MCF 10A (cell line): ENCODE measurements at regions of chr6 and their contacts with region 1.

Region 1: GRCh38 chr6:89035252-89036106 is 45.1 kb upstream of the PNRC1 start:
- DNase-seq: peak; percentile 100
- H3K4me3 Mint-ChIP-seq: peak overlapping the region; percentile 47
- H3K27ac Mint-ChIP-seq: peak overlapping the region; percentile 95
- H3K4me1 Mint-ChIP-seq: peaks cover 21% of the 10 kb centered on the region
- H3K27me3 Mint-ChIP-seq: no peaks in the 10 kb centered on the region
- CTCF ChIP-seq: no peak

Region 2: GRCh38 chr6:88992741-88993552 is 42.5 kb before region 1 on chr6:
- CTCF ChIA-PET with region 1: no interaction called
- POLR2A ChIA-PET with region 1: interaction called, 11 read pairs
- intact Hi-C with region 1: no loop called
- DNase-seq: no peak
- H3K4me3 Mint-ChIP-seq: no peak overlapping the region
- H3K27ac Mint-ChIP-seq: no peak overlapping the region
- H3K4me1 Mint-ChIP-seq: peaks cover 8% of the 10 kb centered on the region
- H3K27me3 Mint-ChIP-seq: no peaks in the 10 kb centered on the region
- CTCF ChIP-seq: no peak

Region 3: DNA sequence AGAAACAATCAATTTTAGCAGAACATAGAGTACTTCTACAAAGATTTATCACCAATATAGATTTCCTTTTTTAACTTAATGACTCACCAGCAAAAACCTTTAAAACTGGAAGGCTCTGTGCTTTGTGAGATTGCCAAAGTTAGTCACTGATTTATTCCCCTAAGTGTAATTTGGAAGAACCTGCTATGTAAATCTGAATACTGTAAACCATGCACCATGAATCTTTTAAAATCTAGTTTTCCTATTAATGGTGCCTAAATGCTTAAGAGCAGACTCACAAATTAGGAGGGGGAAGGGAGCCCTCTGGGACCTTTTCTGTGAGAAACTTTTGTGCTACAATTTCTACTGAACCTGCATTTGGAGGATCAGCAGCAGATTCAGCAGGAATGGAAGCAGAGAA is 12.7 kb before region 1 on chr6:
- CTCF ChIA-PET with region 1: interaction called, 4 read pairs
- POLR2A ChIA-PET with region 1: interaction called, 61 read pairs
- intact Hi-C with region 1: no loop called
- DNase-seq: peak; percentile 40
- H3K4me3 Mint-ChIP-seq: no peak overlapping the region
- H3K27ac Mint-ChIP-seq: no peak overlapping the region
- H3K4me1 Mint-ChIP-seq: peaks cover 24% of the 10 kb centered on the region
- H3K27me3 Mint-ChIP-seq: no peaks in the 10 kb centered on the region
- CTCF ChIP-seq: no peak

Region 4: DNA sequence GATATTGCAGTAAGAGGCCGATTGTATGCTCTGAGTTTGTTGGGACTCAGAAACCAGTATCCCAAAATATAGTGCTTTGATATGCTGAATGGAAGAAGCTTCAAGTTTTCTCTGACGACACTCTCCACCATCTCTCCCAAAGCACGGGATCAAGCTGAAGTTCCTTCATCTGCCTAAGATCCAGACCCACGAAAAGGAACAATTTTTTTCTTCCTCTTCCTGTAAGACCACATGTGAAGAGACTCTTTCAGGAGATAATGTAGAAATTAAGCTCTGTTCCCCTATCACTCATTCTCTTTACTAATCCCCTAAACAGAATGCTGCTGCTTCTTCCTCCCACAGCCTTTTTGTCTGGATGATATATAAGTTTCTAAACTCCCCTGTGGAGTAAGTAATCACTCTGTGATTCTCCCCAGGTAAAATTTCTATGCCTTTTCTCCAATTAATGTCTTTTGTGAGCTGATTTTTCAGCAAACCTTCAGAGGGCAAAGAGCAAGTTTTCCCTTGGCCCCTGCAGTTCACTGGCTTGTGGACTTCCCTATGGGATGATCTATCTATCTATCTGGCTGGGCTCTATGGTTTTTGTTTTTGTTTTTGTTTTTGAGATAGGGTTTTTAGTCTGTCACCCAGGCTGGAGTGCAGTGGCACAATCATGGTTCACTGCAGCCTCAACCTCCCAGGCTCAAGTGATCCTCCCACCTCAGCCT is 31.6 kb after region 1 on chr6:
- CTCF ChIA-PET with region 1: interaction called, 4 read pairs
- POLR2A ChIA-PET with region 1: interaction called, 39 read pairs
- intact Hi-C with region 1: no loop called
- DNase-seq: no peak
- H3K4me3 Mint-ChIP-seq: no peak overlapping the region
- H3K27ac Mint-ChIP-seq: no peak overlapping the region
- H3K4me1 Mint-ChIP-seq: peaks cover 12% of the 10 kb centered on the region
- H3K27me3 Mint-ChIP-seq: no peaks in the 10 kb centered on the region
- CTCF ChIP-seq: no peak

Region 5: GRCh38 chr6:89080542-89081422 is 45.3 kb after region 1 on chr6 and contains the start of gene PNRC1:
- CTCF ChIA-PET with region 1: interaction called, 25 read pairs
- POLR2A ChIA-PET with region 1: interaction called, 573 read pairs
- intact Hi-C with region 1: loop called (anchors 1 kb)
- DNase-seq: peak; percentile 99
- H3K4me3 Mint-ChIP-seq: peak within 1 kb of the TSS; percentile 96
- H3K27ac Mint-ChIP-seq: peak within 1 kb of the TSS; percentile 92
- H3K4me1 Mint-ChIP-seq: peaks cover 19% of the 10 kb centered on the region
- H3K27me3 Mint-ChIP-seq: no peaks in the 10 kb centered on the region
- CTCF ChIP-seq: no peak
- total RNA-seq, gene PNRC1: 158 and 183 TPM in 2 replicates

Region 6: GRCh38 chr6:89352278-89353117 is 317.0 kb after region 1 on chr6 and contains the start of gene UBE2J1:
- CTCF ChIA-PET with region 1: no interaction called
- POLR2A ChIA-PET with region 1: interaction called, 12 read pairs
- intact Hi-C with region 1: no loop called
- DNase-seq: peak; percentile 89
- H3K4me3 Mint-ChIP-seq: peak within 1 kb of the TSS; percentile 96
- H3K27ac Mint-ChIP-seq: peak within 1 kb of the TSS; percentile 98
- H3K4me1 Mint-ChIP-seq: peaks cover 22% of the 10 kb centered on the region
- H3K27me3 Mint-ChIP-seq: no peaks in the 10 kb centered on the region
- CTCF ChIP-seq: no peak
- total RNA-seq, gene UBE2J1: 39.0 and 40.0 TPM in 2 replicates